ENCODE measurements at regions of chr4 and their contacts with region 1.

Region 1: DNA sequence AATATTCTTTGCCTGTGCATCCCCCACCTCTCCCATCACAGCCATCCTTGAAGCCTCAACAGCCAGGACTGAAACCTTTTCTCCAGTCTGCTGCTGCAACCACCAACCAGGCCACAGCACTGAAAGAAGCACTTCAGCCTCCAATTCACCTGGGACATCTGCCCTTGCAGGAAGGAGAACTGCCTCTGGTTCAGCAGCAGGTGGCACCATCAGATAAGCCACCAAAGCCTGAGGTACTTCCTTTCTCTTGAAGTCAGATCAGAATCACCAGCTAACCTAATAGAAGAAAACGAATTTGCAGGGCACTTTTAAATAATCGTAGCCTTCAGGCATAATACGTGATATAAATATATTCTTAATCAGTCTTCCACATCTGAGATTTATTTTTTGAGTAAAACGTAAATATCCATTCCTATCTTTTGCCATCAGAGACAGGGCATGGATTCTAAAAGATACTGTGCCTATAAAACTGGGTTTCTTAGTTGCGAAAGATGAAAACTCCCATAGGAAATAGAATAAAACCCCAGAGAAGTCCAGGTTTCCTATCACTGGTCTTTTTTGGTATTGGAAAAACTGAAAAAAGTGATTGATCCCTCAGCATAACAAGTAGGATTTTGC is 9.5 kb downstream of the AMBN start:
- DNase-seq: peak; percentile 81
- H3K4me3 Mint-ChIP-seq: no peak overlapping the region
- H3K27ac Mint-ChIP-seq: no peak overlapping the region
- H3K4me1 Mint-ChIP-seq: no peaks in the 10 kb centered on the region
- H3K27me3 Mint-ChIP-seq: no peaks in the 10 kb centered on the region

Region 2: DNA sequence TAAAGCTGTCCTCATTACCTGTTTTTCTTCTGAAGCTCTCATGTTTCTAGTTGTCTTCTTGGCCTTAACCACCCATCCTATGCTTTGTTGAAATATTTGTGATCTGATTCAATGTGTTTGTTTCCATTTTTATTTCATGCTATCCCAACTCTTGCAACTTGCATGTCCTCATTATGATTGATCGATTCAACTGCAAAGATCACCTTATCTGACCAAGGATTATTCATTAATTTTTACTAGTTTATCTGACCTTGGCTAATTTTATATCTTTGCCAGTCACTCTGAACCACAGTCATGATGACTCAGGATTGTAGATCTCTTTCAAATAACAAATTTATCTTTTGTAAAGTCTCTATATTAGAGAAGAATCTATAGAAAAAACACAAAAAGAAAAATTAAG is 1032.7 kb before region 1 on chr4:
- CTCF ChIA-PET with region 1: no interaction called
- intact Hi-C with region 1: no loop called
- DNase-seq: no peak
- H3K4me3 Mint-ChIP-seq: no peak overlapping the region
- H3K27ac Mint-ChIP-seq: no peak overlapping the region
- H3K4me1 Mint-ChIP-seq: no peaks in the 10 kb centered on the region
- H3K27me3 Mint-ChIP-seq: no peaks in the 10 kb centered on the region

Region 3: DNA sequence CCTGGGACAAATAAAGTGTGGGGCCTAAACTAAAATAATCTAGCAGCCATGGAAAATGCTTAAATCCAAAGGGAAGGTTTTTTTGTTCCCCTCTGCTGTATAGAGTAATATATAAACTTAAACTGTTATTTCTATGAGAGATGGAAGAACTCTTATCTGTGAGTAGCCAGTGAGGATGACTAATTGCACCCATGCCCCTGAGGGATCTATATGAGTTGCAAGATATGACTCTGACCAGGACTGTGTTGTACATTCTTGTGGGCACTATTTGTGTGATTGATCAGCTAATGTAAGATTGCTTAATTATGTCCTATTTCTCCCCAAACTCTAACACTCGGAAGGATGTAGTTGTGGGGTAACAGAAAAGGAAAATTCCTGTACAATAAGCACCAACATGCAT is 44.7 kb before region 1 on chr4:
- CTCF ChIA-PET with region 1: no interaction called
- intact Hi-C with region 1: no loop called
- DNase-seq: no peak
- H3K4me3 Mint-ChIP-seq: no peak overlapping the region
- H3K27ac Mint-ChIP-seq: no peak overlapping the region
- H3K4me1 Mint-ChIP-seq: peaks cover 9% of the 10 kb centered on the region
- H3K27me3 Mint-ChIP-seq: peaks cover 2% of the 10 kb centered on the region

Region 4: GRCh38 chr4:70589785-70590184 is 11.7 kb before region 1 on chr4:
- CTCF ChIA-PET with region 1: no interaction called
- intact Hi-C with region 1: no loop called
- DNase-seq: no peak
- H3K4me3 Mint-ChIP-seq: no peak overlapping the region
- H3K27ac Mint-ChIP-seq: no peak overlapping the region
- H3K4me1 Mint-ChIP-seq: no peaks in the 10 kb centered on the region
- H3K27me3 Mint-ChIP-seq: no peaks in the 10 kb centered on the region

Region 5: DNA sequence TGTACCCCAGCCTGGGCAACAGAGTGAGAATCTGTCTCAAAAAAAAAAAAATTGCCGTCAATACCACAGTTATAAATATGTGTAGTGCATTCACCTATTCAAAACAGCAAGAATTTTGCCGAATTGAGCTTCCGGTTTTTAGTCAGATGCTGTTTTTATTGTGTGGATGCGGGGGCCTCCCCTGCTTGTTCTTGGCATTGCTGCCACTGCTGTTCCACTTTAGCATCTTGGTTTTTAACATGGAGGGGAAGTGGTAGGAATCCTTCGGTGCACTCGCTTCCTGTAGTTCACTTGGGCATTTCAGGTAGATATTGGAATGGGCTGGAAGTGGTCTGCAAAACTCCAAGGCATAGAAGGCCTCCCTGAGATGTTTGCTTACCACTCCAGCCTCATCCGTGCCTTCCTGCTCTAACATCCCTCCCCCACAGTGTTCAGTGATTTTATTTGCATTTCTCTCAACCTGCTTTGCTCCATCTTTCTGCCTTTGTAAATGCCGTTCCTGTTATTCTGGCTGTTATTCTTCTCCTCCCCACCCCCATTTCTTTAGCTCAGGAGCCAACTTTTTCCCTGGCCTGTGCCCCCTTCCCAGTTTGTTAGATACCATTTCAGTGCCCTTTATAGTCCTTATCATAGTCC is 326.1 kb after region 1 on chr4:
- CTCF ChIA-PET with region 1: no interaction called
- intact Hi-C with region 1: loop called (anchors 5 kb)
- DNase-seq: peak; percentile 73
- H3K4me3 Mint-ChIP-seq: peak overlapping the region; percentile 51
- H3K27ac Mint-ChIP-seq: peak overlapping the region; percentile 66
- H3K4me1 Mint-ChIP-seq: peaks cover 28% of the 10 kb centered on the region
- H3K27me3 Mint-ChIP-seq: no peaks in the 10 kb centered on the region

Region 6: DNA sequence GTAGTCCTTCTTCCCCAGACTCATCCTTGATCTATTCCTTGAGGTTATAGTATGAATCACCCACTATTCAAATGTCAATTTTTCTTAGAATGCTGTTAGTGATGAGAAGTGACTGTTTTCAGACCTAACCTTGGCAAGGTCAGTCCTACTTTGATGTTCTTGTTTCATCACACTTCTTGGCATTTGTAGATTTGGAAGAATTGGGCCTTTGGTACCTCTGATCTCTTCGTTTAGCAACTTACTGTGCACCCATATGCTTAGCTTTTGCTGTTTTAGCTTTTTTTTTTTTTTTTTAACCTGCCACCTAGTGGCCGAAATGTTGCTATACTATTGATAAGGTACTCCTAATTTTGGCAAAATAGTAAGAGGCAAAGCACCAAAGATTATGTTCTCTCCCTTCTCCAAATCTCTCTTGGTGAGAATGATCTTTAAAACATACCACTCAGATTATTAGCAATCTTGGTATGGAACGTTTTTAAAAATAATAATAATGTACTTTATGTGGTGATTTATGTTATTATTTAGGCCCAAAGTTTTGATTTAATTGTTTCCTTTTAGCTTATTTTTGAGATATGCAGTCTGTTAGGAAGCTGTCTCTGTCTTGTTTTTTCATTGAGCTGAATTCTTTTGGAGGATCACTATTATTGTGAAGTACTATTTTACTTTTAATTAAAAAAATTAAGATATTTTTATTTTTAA is 408.5 kb after region 1 on chr4:
- CTCF ChIA-PET with region 1: interaction called, 5 read pairs
- intact Hi-C with region 1: loop called (anchors 1 kb)
- DNase-seq: no peak
- H3K4me3 Mint-ChIP-seq: no peak overlapping the region
- H3K27ac Mint-ChIP-seq: no peak overlapping the region
- H3K4me1 Mint-ChIP-seq: peaks cover 34% of the 10 kb centered on the region
- H3K27me3 Mint-ChIP-seq: no peaks in the 10 kb centered on the region

Region 7: DNA sequence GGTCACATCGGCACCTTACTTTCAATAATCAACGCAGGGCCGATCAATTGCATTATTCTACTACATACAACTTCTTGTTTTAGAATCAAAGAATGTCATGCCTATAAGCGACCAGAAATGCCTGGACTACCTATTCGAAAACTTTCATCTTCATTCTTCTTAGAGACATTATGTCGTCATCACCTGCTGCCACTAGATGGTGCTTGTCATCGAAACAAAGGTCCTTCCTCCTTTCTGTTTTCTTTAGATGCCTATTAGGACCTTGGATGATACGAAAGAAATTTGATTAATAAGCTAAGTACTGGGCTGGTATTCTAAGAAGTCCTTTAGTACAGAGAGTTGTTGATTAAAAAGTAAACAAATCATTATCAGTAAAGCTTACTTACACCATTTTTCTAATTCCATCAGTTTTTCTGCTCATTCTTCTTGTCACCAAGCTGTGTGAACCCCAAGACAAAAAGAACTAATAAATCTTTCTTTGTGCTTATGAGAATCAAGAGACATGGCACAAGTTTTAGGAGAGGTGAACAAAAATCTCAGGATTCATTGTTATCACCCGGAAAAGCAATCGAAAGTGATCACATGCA is 582.8 kb after region 1 on chr4:
- CTCF ChIA-PET with region 1: no interaction called
- intact Hi-C with region 1: loop called (anchors 2 kb)
- DNase-seq: peak; percentile 69
- H3K4me3 Mint-ChIP-seq: no peak overlapping the region
- H3K27ac Mint-ChIP-seq: no peak overlapping the region
- H3K4me1 Mint-ChIP-seq: peaks cover 18% of the 10 kb centered on the region
- H3K27me3 Mint-ChIP-seq: peaks cover 35% of the 10 kb centered on the region

Region 8: DNA sequence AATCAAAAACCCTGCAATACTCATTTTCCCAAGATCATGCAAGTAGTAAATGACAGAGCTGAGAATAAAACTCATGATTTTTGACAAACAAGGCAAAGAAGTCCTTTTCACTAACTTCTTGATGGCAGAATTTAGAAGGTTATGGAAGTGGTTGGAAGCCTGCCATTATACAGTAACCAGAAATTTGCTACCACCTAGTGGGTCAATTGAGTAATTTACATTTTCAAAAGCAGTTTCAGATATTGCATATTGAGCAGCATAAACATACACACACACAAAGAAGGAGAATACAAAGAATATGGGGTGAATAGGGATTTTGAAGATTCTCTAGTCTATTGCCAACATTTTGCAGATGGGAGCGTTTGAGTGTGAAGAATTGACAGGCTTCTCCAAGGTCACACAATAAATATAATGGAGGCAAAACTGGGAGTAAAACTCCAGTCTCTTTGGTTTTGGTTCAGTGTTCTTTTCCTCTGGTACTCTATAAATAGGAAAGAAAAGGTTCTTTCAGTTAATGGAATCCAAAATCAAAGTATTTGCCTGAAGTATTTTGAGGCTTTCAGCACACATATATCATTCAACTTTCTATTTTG is 1112.2 kb after region 1 on chr4:
- CTCF ChIA-PET with region 1: no interaction called
- intact Hi-C with region 1: loop called (anchors 1 kb)
- DNase-seq: no peak
- H3K4me3 Mint-ChIP-seq: no peak overlapping the region
- H3K27ac Mint-ChIP-seq: no peak overlapping the region
- H3K4me1 Mint-ChIP-seq: no peaks in the 10 kb centered on the region
- H3K27me3 Mint-ChIP-seq: no peaks in the 10 kb centered on the region

Region 9: DNA sequence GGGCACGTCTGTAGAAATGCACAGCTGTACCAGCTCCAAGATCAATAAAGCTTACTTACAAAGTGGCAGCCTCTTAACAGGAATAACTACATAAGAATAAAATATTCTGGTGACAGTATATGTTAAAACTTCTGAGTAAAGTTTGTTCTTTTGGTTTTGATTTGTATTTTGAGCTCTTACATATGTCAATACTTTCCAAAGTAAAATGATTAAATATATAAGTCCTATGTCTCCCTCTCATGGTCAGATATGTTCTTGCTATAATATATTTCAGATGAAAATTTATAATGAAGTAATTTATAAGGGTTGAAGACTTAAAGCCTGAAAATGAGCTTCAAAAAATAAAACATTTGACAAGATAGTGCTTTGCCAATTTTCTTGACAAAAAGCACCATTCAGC is 1684.7 kb after region 1 on chr4:
- CTCF ChIA-PET with region 1: no interaction called
- intact Hi-C with region 1: loop called (anchors 5 kb)
- DNase-seq: no peak
- H3K4me3 Mint-ChIP-seq: no peak overlapping the region
- H3K27ac Mint-ChIP-seq: no peak overlapping the region
- H3K4me1 Mint-ChIP-seq: no peaks in the 10 kb centered on the region
- H3K27me3 Mint-ChIP-seq: peaks cover 11% of the 10 kb centered on the region

Region 10: GRCh38 chr4:72302981-72303704 is 1701.6 kb after region 1 on chr4:
- CTCF ChIA-PET with region 1: interaction called, 3 read pairs
- intact Hi-C with region 1: loop called (anchors 1 kb)
- DNase-seq: peak; percentile 49
- H3K4me3 Mint-ChIP-seq: no peak overlapping the region
- H3K27ac Mint-ChIP-seq: no peak overlapping the region
- H3K4me1 Mint-ChIP-seq: no peaks in the 10 kb centered on the region
- H3K27me3 Mint-ChIP-seq: no peaks in the 10 kb centered on the region